ENCODE measurements at regions of chr2 and their contacts with region 1.

Region 1: DNA sequence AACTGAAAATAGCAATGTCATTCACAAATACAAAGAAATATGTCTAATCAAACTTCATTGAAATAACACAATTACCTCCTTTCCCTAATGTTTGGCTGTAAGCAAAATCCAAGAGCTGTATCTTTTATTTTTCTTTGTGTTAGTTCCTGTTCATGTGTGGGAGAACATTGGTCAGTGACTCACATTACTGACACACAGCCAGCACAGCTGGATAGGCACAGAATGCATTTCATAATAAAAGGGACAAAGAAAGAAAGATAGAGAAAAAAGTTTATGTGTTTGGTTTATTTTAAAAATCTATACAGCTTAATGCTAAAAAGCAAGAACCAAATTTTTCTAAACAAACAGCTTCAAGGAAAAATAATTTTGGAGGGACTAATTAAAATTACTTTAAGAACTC is 185.6 kb upstream of the COL3A1 start:
- DNase-seq: no peak
- H3K4me3 ChIP-seq: no peak overlapping the region
- H3K27ac ChIP-seq: peak overlapping the region; percentile 79
- H3K4me1 ChIP-seq: peaks cover 17% of the 10 kb centered on the region
- H3K27me3 ChIP-seq: no peaks in the 10 kb centered on the region
- CTCF ChIP-seq: no peak
- POLR2A ChIP-seq: no peak

Region 2: GRCh38 chr2:188978291-188979081 is 189.9 kb after region 1 on chr2:
- intact Hi-C with region 1: loop called (anchors 5 kb)
- DNase-seq: no peak
- H3K4me3 ChIP-seq: peak overlapping the region; percentile 37 to 55
- H3K27ac ChIP-seq: peak overlapping the region; percentile 91
- H3K4me1 ChIP-seq: no peaks in the 10 kb centered on the region
- H3K27me3 ChIP-seq: no peaks in the 10 kb centered on the region
- CTCF ChIP-seq: peak in 1 of 3 experiments; percentile 31
- POLR2A ChIP-seq: no peak

Measured in vagina (tissue), 2 donors.